Activated CD4-positive, alpha-beta T cell treated with anti-CD3 and anti-CD28 coated beads, Interleukin-2, amount 10 ng/mL, durations not matched to agents 24 days and 14 days (primary cell): ENCODE measurements at regions of chr12 and their contacts with region 1.

Region 1: DNA sequence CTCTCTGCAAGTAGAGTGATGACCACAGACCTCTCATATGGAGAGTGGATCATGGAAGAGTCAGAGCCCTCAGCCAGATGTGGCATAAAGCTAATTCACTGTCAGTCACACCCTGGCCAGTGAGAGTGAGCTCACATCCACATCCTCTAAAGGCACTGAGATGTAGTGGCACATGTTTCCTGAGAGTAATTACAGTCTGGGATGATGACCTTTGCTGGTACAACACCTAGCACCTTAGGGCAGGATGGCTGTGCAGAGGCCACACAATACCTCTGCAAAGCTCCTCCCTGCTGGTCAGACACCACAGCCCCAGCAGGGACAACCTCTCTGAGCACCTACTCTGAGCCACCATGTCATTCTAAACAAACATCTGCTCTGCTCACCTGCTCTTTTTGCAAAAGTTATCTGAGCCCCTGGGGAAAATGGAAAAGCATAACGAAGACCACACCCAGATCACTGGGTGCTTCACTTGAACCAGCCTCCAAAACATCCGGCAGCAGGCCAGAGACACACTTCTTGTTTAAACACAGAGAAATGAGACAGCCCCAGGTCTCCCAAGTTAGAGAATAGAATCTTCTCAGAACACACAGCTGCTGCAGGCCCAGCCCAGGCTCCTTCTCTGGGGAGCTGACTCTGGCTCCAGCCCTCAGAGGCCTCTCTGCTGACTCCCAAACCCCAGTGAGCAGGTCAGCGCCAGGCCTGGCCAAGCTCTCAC is 30.3 kb downstream of the PITPNM2 start:
- DNase-seq: peak; percentile 81
- H3K4me3 Mint-ChIP-seq: peak overlapping the region; percentile 64
- H3K27ac Mint-ChIP-seq: peak overlapping the region; percentile 90
- H3K4me1 Mint-ChIP-seq: peaks cover 49% of the 10 kb centered on the region
- H3K27me3 Mint-ChIP-seq: no peaks in the 10 kb centered on the region

Region 2: GRCh38 chr12:122965851-122966722 is 154.5 kb before region 1 on chr12 and contains the start of gene ABCB9:
- intact Hi-C with region 1: no loop called
- DNase-seq: peak; percentile 96
- H3K4me3 Mint-ChIP-seq: peak within 1 kb of the TSS; percentile 69
- H3K27ac Mint-ChIP-seq: no peak within 1 kb of the TSS
- H3K4me1 Mint-ChIP-seq: peaks cover 4% of the 10 kb centered on the region
- H3K27me3 Mint-ChIP-seq: no peaks in the 10 kb centered on the region
- total RNA-seq, gene ABCB9: 3.7 and 4.1 TPM in 2 replicates

Region 3: GRCh38 chr12:123106628-123107359 is 13.8 kb before region 1 on chr12:
- intact Hi-C with region 1: loop called (anchors 1 kb)
- DNase-seq: peak; percentile 92
- H3K4me3 Mint-ChIP-seq: peak overlapping the region; percentile 44
- H3K27ac Mint-ChIP-seq: peak overlapping the region; percentile 94
- H3K4me1 Mint-ChIP-seq: peaks cover 50% of the 10 kb centered on the region
- H3K27me3 Mint-ChIP-seq: no peaks in the 10 kb centered on the region